PC-9 (cell line): ENCODE measurements at regions of chr1 and their contacts with region 1.

Region 1: DNA sequence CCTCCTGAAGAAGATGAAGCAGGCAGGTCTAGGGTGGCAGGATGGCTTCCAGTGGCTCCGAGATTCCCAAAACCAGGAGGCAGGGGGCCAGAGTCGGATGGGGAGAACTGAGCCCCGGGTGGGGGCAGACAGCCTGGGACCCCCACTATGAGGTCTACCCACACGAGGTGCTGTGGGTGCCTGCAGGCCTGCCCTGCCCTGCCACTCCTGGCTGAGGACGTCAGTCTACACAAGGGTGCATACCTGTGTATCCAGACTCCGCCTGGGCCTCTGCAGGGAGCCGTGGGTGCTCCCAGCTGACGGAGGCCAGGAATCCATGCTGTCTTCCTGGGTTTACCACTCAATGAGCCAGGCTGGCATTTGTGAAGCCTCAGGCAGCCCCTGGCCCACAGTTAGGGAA is 80.3 kb downstream of the PRDM16 start:
- DNase-seq: no peak
- H3K4me3 ChIP-seq: no peak overlapping the region
- H3K27ac ChIP-seq: no peak overlapping the region
- H3K4me1 ChIP-seq: no peaks in the 10 kb centered on the region
- H3K27me3 ChIP-seq: peaks cover 92% of the 10 kb centered on the region
- CTCF ChIP-seq: no peak

Region 2: DNA sequence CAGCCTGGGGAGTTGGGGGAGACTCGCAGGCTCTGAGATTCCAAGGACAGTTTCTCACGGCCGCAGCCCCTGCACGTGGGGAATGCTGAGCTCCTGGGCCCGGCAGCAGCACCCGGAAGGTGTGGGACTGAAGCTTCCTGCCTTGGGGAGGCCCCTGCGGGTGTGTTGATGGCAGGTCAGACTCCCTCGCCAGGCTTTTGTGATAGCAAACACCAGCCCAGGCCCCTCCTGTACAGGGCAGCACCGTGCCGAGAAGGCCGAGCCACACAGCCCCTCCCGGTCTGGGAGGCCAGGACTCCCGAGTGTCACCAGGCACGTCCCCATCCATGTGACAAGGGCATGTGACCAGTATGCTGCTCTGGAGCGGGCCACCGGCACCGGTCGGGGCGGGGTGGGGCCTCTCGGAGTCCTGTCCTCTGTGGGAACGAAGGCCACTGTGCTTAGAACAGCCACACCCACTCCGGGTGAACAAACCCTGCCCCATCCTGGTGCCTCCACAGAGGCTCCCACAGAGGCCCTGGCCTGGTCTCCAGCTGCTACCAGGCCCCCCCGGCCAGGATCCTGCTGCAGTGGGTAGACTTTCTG is 274.1 kb after region 1 on chr1:
- CTCF ChIA-PET with region 1: interaction called, 11 read pairs
- POLR2A ChIA-PET with region 1: no interaction called
- intact Hi-C with region 1: no loop called
- DNase-seq: no peak
- H3K4me3 ChIP-seq: no peak overlapping the region
- H3K27ac ChIP-seq: no peak overlapping the region
- H3K4me1 ChIP-seq: no peaks in the 10 kb centered on the region
- H3K27me3 ChIP-seq: peaks cover 95% of the 10 kb centered on the region
- CTCF ChIP-seq: no peak